ENCODE measurements at regions of chr7 and their contacts with region 1.

Region 1: DNA sequence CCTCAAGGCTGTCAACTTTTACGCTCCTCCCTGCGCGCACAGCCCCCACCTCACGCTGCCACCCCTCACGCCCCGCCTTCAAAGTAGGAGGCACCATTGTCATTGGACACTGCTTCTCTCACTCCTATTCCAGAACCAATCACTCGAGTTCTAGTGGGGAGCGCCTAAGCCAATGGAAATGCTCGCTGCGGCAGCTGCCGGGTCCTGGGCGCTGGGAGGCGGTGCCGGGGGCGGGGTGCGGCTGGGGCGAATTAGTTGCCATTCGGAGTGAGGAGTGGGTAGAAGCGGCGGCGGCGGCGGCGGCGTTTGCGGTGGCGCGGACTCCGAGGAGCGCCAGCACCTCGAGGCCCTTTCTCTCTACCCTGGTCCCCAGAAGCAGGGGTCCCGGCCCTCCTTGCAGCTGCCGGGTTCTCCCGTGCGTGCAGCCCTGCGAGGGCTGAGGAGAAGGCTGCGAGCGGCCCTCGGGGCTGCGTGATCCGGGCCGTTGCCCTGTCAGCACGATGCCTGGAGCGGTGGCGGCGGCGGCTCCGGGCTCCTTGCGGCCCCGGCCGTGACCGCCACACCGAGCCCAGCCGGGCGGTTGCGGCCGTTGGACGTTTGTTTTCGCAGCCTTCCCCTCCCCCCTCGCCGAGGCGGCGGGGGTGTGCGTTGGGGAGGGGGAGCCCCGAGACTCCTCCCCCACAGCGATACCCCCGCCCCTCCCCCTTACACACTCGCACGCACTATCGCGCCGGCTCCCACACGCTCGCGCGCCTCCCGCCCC is at the start of gene GLCCI1:
- DNase-seq: peak; percentile 98
- ATAC-seq: peak; percentile 88
- H3K4me3 ChIP-seq: peak within 1 kb of the TSS; percentile 82
- H3K27ac ChIP-seq: peak within 1 kb of the TSS; percentile 95
- H3K4me1 ChIP-seq: peaks cover 31% of the 10 kb centered on the region
- H3K27me3 ChIP-seq: no peaks in the 10 kb centered on the region
- CTCF ChIP-seq: no peak
- EP300 ChIP-seq: peak; percentile 21 to 61; a peak in 1 of 4 replicates
- POLR2A ChIP-seq: peak; percentile 74
- RAD21 ChIP-seq: no peak
- polyA plus RNA-seq, gene GLCCI1: 16.2 to 17.9 TPM

Region 2: DNA sequence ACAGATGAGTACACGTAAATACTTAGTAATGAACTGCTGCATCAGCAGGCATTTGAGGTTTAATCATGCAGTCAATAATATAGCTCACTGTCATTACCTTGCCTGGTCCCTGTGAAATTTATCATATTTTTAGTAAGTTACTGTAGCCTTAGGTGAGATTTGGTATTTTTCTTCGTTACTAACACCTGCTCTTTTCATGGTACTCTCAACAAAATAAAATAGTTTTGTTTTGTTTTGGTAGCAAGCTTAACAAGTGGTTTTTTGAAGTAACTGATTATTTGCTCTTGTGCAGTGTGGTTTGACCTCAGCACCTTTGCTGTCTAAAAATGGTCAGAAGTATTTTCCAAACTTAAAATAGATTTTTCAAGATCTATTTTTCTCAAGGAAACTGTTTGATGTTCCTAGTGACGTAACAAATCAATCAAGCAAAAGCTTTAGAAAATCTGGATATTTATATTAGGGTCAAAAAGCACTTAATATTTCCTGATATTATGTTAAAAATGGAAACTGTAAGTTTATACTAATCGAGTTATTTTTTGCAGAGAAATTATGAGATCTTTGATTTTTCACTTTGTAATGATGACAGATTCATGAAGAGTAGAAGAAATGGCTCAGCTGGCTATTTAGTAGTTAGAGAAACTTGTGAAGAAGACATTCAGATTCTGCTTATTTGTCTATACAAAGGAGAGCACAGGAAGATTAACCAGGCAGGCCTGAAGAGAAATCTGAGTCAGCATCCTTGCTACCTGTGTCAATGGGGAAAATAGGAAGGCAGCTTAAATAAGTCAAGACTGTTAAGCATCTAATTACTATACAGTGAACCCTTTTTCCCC is 229.3 kb before region 1 on chr7:
- CTCF ChIA-PET with region 1: interaction called, 3 read pairs
- POLR2A ChIA-PET with region 1: interaction called, 3 read pairs
- RAD21 ChIA-PET with region 1: interaction called, 5 read pairs
- SMC1A ChIA-PET with region 1: interaction called, 12 read pairs
- in situ Hi-C with region 1: no loop called
- intact Hi-C with region 1: no loop called
- DNase-seq: no peak
- ATAC-seq: peak; percentile 88
- H3K4me3 ChIP-seq: no peak overlapping the region
- H3K27ac ChIP-seq: no peak overlapping the region
- H3K4me1 ChIP-seq: peaks cover 5% of the 10 kb centered on the region; the same call in 1 of the 2 replicates
- H3K27me3 ChIP-seq: no peaks in the 10 kb centered on the region
- CTCF ChIP-seq: no peak
- EP300 ChIP-seq: peak; percentile 62 to 98
- POLR2A ChIP-seq: no peak
- RAD21 ChIP-seq: no peak

Region 3: GRCh38 chr7:7895754-7896153 is 73.0 kb before region 1 on chr7:
- CTCF ChIA-PET with region 1: no interaction called
- POLR2A ChIA-PET with region 1: no interaction called
- RAD21 ChIA-PET with region 1: no interaction called
- SMC1A ChIA-PET with region 1: no interaction called
- in situ Hi-C with region 1: no loop called
- intact Hi-C with region 1: no loop called
- DNase-seq: no peak
- ATAC-seq: no peak
- H3K4me3 ChIP-seq: no peak overlapping the region
- H3K27ac ChIP-seq: no peak overlapping the region
- H3K4me1 ChIP-seq: no peaks in the 10 kb centered on the region
- H3K27me3 ChIP-seq: no peaks in the 10 kb centered on the region
- CTCF ChIP-seq: no peak
- EP300 ChIP-seq: no peak
- POLR2A ChIP-seq: no peak
- RAD21 ChIP-seq: no peak

Region 4: DNA sequence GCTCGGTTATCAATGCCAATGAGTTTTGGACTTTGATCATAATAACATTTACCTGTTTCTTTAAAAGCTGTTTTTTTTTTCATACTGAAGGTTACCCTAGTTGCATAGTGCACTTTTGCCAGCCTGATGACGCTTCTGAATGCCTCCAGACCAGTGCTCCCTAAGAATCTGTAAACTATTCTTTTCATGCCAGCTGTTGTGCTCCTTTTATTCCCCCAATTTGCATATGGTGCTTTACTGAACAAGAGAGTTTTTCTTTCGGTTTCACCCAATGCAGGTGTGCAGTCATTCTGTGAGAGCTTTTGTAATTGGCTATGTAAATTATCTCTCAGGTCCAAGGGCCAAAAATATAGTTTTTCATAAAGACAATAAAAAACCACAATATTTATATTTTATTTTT is 48.2 kb before region 1 on chr7:
- CTCF ChIA-PET with region 1: interaction called, 15 read pairs
- POLR2A ChIA-PET with region 1: interaction called, 17 read pairs
- RAD21 ChIA-PET with region 1: interaction called, 52 read pairs
- SMC1A ChIA-PET with region 1: interaction called, 59 read pairs
- in situ Hi-C with region 1: no loop called
- intact Hi-C with region 1: loop called (anchors 1 kb)
- DNase-seq: peak; percentile 76
- ATAC-seq: peak; percentile 93
- H3K4me3 ChIP-seq: no peak overlapping the region; the same call in 1 of the 2 replicates
- H3K27ac ChIP-seq: no peak overlapping the region; the same call in 1 of the 2 replicates
- H3K4me1 ChIP-seq: peaks cover 50% of the 10 kb centered on the region
- H3K27me3 ChIP-seq: no peaks in the 10 kb centered on the region
- CTCF ChIP-seq: no peak
- EP300 ChIP-seq: peak; percentile 82 to 91; a peak in 2 of 4 replicates
- POLR2A ChIP-seq: no peak
- RAD21 ChIP-seq: peak; percentile 11; the same call in 1 of the 2 replicates

Region 5: DNA sequence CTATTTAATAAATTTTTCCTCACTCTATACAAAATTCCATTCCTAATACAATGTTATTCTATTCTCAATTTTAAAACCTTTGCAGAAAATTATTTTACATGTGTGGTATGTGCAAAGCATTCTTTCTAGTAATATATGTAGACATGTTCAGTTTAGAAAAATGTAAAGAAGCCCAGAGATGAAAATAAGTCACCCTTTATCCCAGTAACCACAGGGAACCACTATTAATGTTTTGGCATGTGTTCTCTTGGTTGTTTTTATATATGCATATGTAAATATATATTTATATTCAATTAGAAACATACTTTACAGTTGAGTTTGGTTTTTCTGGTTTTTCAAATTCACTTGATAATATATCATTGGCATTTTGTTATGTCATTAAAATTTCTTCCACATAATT is 14.9 kb before region 1 on chr7:
- CTCF ChIA-PET with region 1: interaction called, 5 read pairs
- POLR2A ChIA-PET with region 1: interaction called, 5 read pairs
- RAD21 ChIA-PET with region 1: interaction called, 80 read pairs
- SMC1A ChIA-PET with region 1: interaction called, 65 read pairs
- in situ Hi-C with region 1: no loop called
- intact Hi-C with region 1: no loop called
- DNase-seq: no peak
- ATAC-seq: no peak
- H3K4me3 ChIP-seq: no peak overlapping the region
- H3K27ac ChIP-seq: no peak overlapping the region
- H3K4me1 ChIP-seq: no peaks in the 10 kb centered on the region
- H3K27me3 ChIP-seq: no peaks in the 10 kb centered on the region
- CTCF ChIP-seq: no peak
- EP300 ChIP-seq: no peak
- POLR2A ChIP-seq: no peak
- RAD21 ChIP-seq: no peak

Region 6: GRCh38 chr7:8115547-8116402 is 147.1 kb after region 1 on chr7:
- CTCF ChIA-PET with region 1: no interaction called
- POLR2A ChIA-PET with region 1: interaction called, 4 read pairs
- RAD21 ChIA-PET with region 1: interaction called, 5 read pairs
- SMC1A ChIA-PET with region 1: interaction called, 12 read pairs
- in situ Hi-C with region 1: no loop called
- intact Hi-C with region 1: no loop called
- DNase-seq: peak; percentile 98
- ATAC-seq: peak; percentile 85
- H3K4me3 ChIP-seq: no peak overlapping the region
- H3K27ac ChIP-seq: peak overlapping the region; percentile 56
- H3K4me1 ChIP-seq: peaks cover 43% of the 10 kb centered on the region
- H3K27me3 ChIP-seq: no peaks in the 10 kb centered on the region
- CTCF ChIP-seq: no peak
- EP300 ChIP-seq: peak; percentile 77 to 93; a peak in 2 of 4 replicates
- POLR2A ChIP-seq: no peak
- RAD21 ChIP-seq: peak; percentile 30; the same call in 1 of the 2 replicates

Region 7: GRCh38 chr7:8176370-8177081 is 207.8 kb after region 1 on chr7:
- CTCF ChIA-PET with region 1: interaction called, 6 read pairs
- POLR2A ChIA-PET with region 1: interaction called, 13 read pairs
- RAD21 ChIA-PET with region 1: interaction called, 40 read pairs
- SMC1A ChIA-PET with region 1: interaction called, 32 read pairs
- in situ Hi-C with region 1: no loop called
- intact Hi-C with region 1: no loop called
- DNase-seq: peak; percentile 96
- ATAC-seq: peak; percentile 82
- H3K4me3 ChIP-seq: peak overlapping the region; percentile 8
- H3K27ac ChIP-seq: peak overlapping the region; percentile 98
- H3K4me1 ChIP-seq: peaks cover 39% of the 10 kb centered on the region
- H3K27me3 ChIP-seq: no peaks in the 10 kb centered on the region
- CTCF ChIP-seq: no peak
- EP300 ChIP-seq: peak; percentile 22 to 52; a peak in 2 of 4 replicates
- POLR2A ChIP-seq: peak; percentile 62
- RAD21 ChIP-seq: 0 out of 2 replicates have a peak, but pooled peaks have one; percentile 3

Region 8: GRCh38 chr7:8389593-8390261 is 421.0 kb after region 1 on chr7:
- CTCF ChIA-PET with region 1: no interaction called
- POLR2A ChIA-PET with region 1: no interaction called
- RAD21 ChIA-PET with region 1: no interaction called
- SMC1A ChIA-PET with region 1: no interaction called
- in situ Hi-C with region 1: no loop called
- intact Hi-C with region 1: no loop called
- DNase-seq: no peak
- ATAC-seq: no peak
- H3K4me3 ChIP-seq: no peak overlapping the region
- H3K27ac ChIP-seq: no peak overlapping the region
- H3K4me1 ChIP-seq: peaks cover 21% of the 10 kb centered on the region
- H3K27me3 ChIP-seq: no peaks in the 10 kb centered on the region; a peak in 1 of 4 replicates
- CTCF ChIP-seq: no peak
- EP300 ChIP-seq: no peak
- POLR2A ChIP-seq: no peak
- RAD21 ChIP-seq: no peak

Measured in GM12878 (cell line).